Heart left ventricle (tissue), 16 donors: ENCODE measurements at regions of chr20 and their contacts with region 1.

Region 1: GRCh38 chr20:49427751-49428518 is 54.5 kb downstream of the KCNB1 start:
- DNase-seq: peak in 4 of 5 donors; percentile 52 to 64 (median 58)
- ATAC-seq: peak; percentile 58 to 78 (median 76)
- H3K4me3 ChIP-seq: peak overlapping the region in 3 of 12 donors; percentile 16 to 30 (median 28)
- H3K27ac ChIP-seq: peak overlapping the region; percentile 46 to 87 (median 81)
- H3K4me1 ChIP-seq: peaks cover 0 to 44% (median 12%) of the 10 kb centered on the region in 12 donors
- H3K27me3 ChIP-seq: no peaks in the 10 kb centered on the region
- CTCF ChIP-seq: no peak
- POLR2A ChIP-seq: no peak

Region 2: GRCh38 chr20:49384437-49385088 is 43.4 kb before region 1 on chr20:
- intact Hi-C with region 1: loop called in 4 of 10 experiments (anchors 5 kb)
- DNase-seq: peak; percentile 60 to 88 (median 71)
- ATAC-seq: peak in 2 of 4 donors; percentile 42 to 46
- H3K4me3 ChIP-seq: no peak overlapping the region
- H3K27ac ChIP-seq: peak overlapping the region in 1 of 12 donors; percentile 20
- H3K4me1 ChIP-seq: peaks cover 0 to 32% (median 17%) of the 10 kb centered on the region in 12 donors
- H3K27me3 ChIP-seq: no peaks in the 10 kb centered on the region
- CTCF ChIP-seq: peak; percentile 49 to 80 (median 74)
- POLR2A ChIP-seq: no peak

Region 3: DNA sequence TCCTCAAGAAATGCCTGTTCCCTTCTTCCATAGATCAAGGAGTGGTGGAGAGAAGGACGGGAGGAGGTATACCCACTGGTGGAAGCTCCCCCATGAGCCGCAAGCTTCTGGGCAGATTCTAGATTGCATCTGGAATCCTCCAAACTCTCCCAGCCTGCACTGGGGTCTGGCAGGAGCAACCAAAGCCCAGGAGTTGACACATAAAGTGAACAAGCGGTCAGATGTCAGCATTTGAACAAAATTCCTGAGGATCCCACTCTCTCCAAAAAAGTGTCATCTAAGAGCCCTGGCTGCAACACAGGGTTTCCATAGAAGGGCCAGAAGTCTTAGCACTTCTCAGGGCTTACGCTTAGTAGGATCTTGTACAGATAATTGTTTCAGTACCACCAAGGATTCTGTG is 33.7 kb before region 1 on chr20:
- intact Hi-C with region 1: loop called in 5 of 10 experiments (anchors 5 kb)
- DNase-seq: no peak
- ATAC-seq: no peak
- H3K4me3 ChIP-seq: no peak overlapping the region
- H3K27ac ChIP-seq: peak overlapping the region in 1 of 12 donors; percentile 87
- H3K4me1 ChIP-seq: peaks cover 0 to 33% (median 13%) of the 10 kb centered on the region in 12 donors
- H3K27me3 ChIP-seq: no peaks in the 10 kb centered on the region
- CTCF ChIP-seq: no peak
- POLR2A ChIP-seq: no peak

Region 4: DNA sequence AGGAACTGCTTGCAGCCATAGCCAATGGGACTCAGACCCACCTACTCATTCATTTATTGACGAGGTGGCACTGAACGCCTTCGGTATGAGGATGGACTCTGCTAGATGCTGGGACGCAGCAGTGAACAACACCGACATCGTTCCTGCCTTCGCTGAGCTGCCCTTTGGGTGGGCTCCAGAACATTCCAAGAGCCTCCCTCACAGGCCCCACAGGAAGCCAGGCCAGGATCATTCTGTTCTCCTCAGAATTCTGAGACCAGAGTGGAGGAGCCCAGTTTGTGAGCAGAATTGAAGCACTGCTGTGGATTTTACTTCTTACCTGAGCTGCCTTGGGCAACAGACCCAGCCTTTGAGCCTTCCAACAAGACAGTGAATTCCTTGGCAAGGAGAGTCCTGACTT is 27.5 kb before region 1 on chr20:
- intact Hi-C with region 1: loop called in 1 of 10 experiments (anchors 2 kb)
- DNase-seq: peak in 4 of 5 donors; percentile 14 to 56 (median 44)
- ATAC-seq: peak; percentile 63 to 84 (median 70)
- H3K4me3 ChIP-seq: no peak overlapping the region
- H3K27ac ChIP-seq: peak overlapping the region; percentile 20 to 87 (median 74)
- H3K4me1 ChIP-seq: peaks cover 0 to 35% (median 15%) of the 10 kb centered on the region in 12 donors
- H3K27me3 ChIP-seq: no peaks in the 10 kb centered on the region
- CTCF ChIP-seq: no peak
- POLR2A ChIP-seq: peak in 1 of 2 donors; percentile 16

Region 5: DNA sequence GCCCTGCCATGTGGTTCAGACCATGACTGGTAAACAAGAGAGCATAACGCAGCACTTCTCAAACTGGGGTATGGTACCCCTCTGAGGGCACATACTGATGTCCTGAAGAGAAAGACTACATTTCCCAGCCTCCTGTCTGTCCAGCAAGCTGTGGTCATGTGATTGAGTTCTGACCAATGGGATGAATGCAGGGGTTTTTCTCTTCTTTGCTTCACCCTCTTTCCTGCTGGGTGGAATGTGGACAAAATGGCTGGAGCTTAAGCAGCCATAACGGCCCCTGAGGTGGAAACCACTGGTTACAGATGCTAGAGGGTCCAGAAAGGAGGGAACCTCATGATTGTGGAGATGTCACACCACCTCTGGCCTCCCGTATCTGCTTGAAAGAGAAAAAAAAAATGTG is 74.0 kb after region 1 on chr20:
- intact Hi-C with region 1: no loop called
- DNase-seq: no peak
- ATAC-seq: peak in 2 of 4 donors; percentile 25 to 36
- H3K4me3 ChIP-seq: no peak overlapping the region
- H3K27ac ChIP-seq: no peak overlapping the region
- H3K4me1 ChIP-seq: peaks cover 0 to 9% (median 0%) of the 10 kb centered on the region in 12 donors
- H3K27me3 ChIP-seq: peaks cover 0 to 16% (median 0%) of the 10 kb centered on the region in 9 donors
- CTCF ChIP-seq: no peak
- POLR2A ChIP-seq: no peak